B cell (primary cell): ENCODE measurements at regions of chr14 and their contacts with region 1.

Region 1: DNA sequence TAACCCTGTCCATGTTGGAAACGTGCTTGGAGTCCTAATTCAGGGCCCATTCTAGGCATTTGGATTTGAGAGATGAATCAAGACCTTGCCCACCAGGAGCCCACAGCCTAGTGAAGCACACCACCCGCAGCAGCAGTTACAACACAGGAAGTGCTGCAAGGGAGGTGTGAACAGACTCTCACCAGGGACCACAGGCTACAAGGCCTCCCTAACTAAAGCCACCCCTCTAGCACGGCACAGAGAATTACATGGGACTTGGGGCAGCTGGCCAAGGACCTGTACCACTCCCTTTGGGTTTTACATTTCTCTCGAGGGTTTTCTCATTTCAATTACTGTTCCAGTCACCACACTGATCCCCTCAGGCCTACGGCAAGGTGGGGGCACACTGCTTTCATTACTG is 49.5 kb upstream of the FOXN3 start:
- DNase-seq: peak; percentile 32
- ATAC-seq: peak; percentile 44
- H3K4me3 ChIP-seq: no peak overlapping the region
- H3K4me3 Mint-ChIP-seq: peak overlapping the region; percentile 26
- H3K27ac ChIP-seq: peak overlapping the region; percentile 14 to 54
- H3K27ac Mint-ChIP-seq: peak overlapping the region; percentile 65
- H3K4me1 ChIP-seq: peaks cover 22 to 34% of the 10 kb centered on the region in 2 donors
- H3K4me1 Mint-ChIP-seq: peaks cover 53% of the 10 kb centered on the region
- H3K27me3 ChIP-seq: no peaks in the 10 kb centered on the region
- H3K27me3 Mint-ChIP-seq: no peaks in the 10 kb centered on the region
- CTCF ChIP-seq: no peak

Region 2: GRCh38 chr14:89445273-89445973 is 21.1 kb before region 1 on chr14:
- CTCF ChIA-PET with region 1: interaction called, 3 read pairs
- POLR2A ChIA-PET with region 1: interaction called, 9 read pairs
- intact Hi-C with region 1: loop called (anchors 2 kb)
- DNase-seq: peak; percentile 40
- ATAC-seq: peak; percentile 50
- H3K4me3 ChIP-seq: no peak overlapping the region
- H3K4me3 Mint-ChIP-seq: peak overlapping the region; percentile 45
- H3K27ac ChIP-seq: peak overlapping the region; percentile 71 to 89
- H3K27ac Mint-ChIP-seq: peak overlapping the region; percentile 75
- H3K4me1 ChIP-seq: peaks cover 61 to 70% of the 10 kb centered on the region in 2 donors
- H3K4me1 Mint-ChIP-seq: peaks cover 74% of the 10 kb centered on the region
- H3K27me3 ChIP-seq: no peaks in the 10 kb centered on the region
- H3K27me3 Mint-ChIP-seq: no peaks in the 10 kb centered on the region
- CTCF ChIP-seq: no peak

Region 3: DNA sequence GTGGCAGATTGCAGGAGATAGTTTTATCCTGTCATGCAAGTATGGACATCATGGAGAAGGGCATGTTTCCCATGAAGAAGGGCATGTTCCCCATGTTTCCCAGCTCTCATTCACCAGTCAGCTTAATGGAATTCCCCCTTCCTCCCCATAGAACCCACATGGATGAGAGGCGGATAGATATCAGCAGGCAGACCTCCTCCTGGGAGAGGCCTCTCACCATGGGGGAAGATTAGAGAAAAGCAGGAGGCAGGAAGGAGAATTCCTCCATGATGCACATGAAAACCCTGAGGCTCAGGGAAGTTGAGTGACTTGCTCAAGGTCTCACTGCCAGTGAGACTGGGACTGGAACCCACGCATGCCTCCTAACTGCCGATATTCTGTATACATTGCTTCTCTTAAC is 43.4 kb after region 1 on chr14:
- CTCF ChIA-PET with region 1: no interaction called
- POLR2A ChIA-PET with region 1: no interaction called
- intact Hi-C with region 1: loop called (anchors 5 kb)
- DNase-seq: no peak
- ATAC-seq: no peak
- H3K4me3 ChIP-seq: no peak overlapping the region
- H3K4me3 Mint-ChIP-seq: peak overlapping the region; percentile 83
- H3K27ac ChIP-seq: peak overlapping the region; percentile 14 to 77
- H3K27ac Mint-ChIP-seq: peak overlapping the region; percentile 92
- H3K4me1 ChIP-seq: peaks cover 19 to 23% of the 10 kb centered on the region in 2 donors
- H3K4me1 Mint-ChIP-seq: peaks cover 41% of the 10 kb centered on the region
- H3K27me3 ChIP-seq: no peaks in the 10 kb centered on the region
- H3K27me3 Mint-ChIP-seq: no peaks in the 10 kb centered on the region
- CTCF ChIP-seq: no peak